ENCODE measurements at regions of chr13 and their contacts with region 1.

Region 1: DNA sequence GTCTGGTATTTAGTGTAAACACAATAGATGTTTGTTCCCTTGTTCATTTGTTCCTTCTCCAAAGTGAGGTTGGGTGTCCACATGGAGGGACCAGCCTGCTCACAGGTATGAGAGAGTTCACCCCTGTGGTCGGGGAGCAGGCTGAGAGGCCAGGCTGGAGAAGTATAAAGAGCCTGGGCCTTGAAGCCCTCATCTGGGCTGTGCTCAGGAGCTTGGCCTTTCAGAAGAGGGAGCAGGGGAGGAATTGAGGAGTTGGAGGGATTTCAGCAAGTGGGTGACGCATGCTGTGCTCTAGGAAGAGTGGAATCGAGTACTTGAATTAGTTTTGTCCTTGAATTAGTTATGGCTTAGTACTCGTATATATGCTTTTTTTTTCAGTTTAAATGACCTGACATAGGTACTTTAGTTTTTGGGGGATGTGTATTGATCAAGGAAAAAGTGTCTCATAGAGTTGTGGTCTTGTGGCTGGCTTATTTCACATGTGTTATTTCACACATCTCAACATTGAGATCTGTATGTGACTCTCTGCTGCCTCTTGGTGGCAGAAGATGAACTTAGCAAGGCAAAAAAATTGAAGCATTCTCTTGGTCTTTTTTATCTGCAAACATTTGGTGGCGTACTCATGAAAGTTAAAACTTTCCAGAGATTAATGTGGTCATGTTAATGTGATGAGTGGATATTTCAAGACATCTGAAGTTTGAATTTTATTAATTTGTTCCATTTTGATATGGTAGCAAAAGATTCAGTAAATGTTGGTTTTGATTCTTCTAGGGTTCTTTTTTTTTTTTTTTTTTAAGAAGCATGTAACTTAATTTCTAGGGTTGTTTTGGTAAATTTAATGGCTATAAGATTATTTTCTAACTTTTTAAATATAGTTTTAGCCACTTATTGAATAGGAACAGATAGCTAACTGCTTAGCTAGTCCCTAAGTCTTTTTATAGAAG is 54.3 kb downstream of the SLAIN1 start:
- DNase-seq: peak; percentile 2
- H3K4me3 ChIP-seq: no peak overlapping the region
- H3K27ac ChIP-seq: no peak overlapping the region
- H3K27me3 ChIP-seq: no peaks in the 10 kb centered on the region
- CTCF ChIP-seq: peak; percentile 82

Region 2: DNA sequence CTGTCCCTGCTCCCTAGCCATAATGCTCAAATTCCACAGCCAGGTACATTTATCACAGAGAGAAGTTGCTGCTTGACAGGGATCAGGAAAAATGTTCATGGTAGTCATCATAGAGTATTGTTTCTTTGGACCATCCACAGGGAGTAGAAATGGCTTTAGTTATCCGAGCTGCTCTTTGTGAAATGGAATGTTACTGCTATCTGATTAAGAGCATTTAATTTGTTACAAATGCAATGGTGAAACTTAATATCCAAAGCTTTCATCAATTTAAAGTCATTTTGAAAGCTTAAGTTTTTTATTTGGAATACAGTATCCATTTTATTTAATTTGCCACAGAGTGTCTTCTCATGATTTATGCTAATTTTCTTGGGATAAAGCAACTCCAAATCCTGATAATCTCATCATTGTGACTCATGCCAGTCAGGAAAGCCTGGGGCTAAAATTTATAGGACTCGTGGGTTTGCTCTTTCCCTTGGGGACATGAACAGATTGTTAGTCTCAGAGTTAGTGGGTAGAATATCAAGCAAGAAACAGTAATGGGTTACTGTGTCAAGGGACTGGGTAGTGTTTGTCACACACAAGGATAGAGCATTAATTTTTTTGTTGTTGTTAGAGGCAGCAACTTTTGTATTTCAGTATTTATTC is 156.5 kb before region 1 on chr13:
- CTCF ChIA-PET with region 1: interaction called, 15 read pairs
- POLR2A ChIA-PET with region 1: no interaction called
- DNase-seq: no peak
- H3K4me3 ChIP-seq: no peak overlapping the region
- H3K27ac ChIP-seq: no peak overlapping the region
- H3K27me3 ChIP-seq: no peaks in the 10 kb centered on the region
- CTCF ChIP-seq: no peak

Region 3: GRCh38 chr13:78036841-78037240 is 285.1 kb after region 1 on chr13:
- CTCF ChIA-PET with region 1: no interaction called
- POLR2A ChIA-PET with region 1: no interaction called
- DNase-seq: no peak
- H3K4me3 ChIP-seq: no peak overlapping the region
- H3K27ac ChIP-seq: no peak overlapping the region
- H3K27me3 ChIP-seq: no peaks in the 10 kb centered on the region
- CTCF ChIP-seq: no peak

Measured in AG04450 (cell line).